Right cardiac atrium (tissue), 5 donors: ENCODE measurements at regions of chr13 and their contacts with region 1.

Region 1: GRCh38 chr13:32594157-32594738 is 8.0 kb downstream of the PDS5B start:
- DNase-seq: no peak
- ATAC-seq: no peak
- H3K4me3 ChIP-seq: no peak overlapping the region
- H3K27ac ChIP-seq: no peak overlapping the region
- H3K4me1 ChIP-seq: no peaks in the 10 kb centered on the region
- H3K27me3 ChIP-seq: no peaks in the 10 kb centered on the region

Region 2: GRCh38 chr13:32019612-32020233 is 574.5 kb before region 1 on chr13:
- intact Hi-C with region 1: no loop called
- DNase-seq: peak in 2 of 3 donors; percentile 27 to 42
- ATAC-seq: peak; percentile 61 to 71
- H3K4me3 ChIP-seq: no peak overlapping the region
- H3K27ac ChIP-seq: no peak overlapping the region
- H3K4me1 ChIP-seq: peaks cover 9% of the 10 kb centered on the region
- H3K27me3 ChIP-seq: no peaks in the 10 kb centered on the region

Region 3: GRCh38 chr13:32632343-32632909 is 38.2 kb after region 1 on chr13:
- intact Hi-C with region 1: loop called in 3 of 4 experiments (anchors 5 kb)
- DNase-seq: no peak
- ATAC-seq: no peak
- H3K4me3 ChIP-seq: no peak overlapping the region
- H3K27ac ChIP-seq: no peak overlapping the region
- H3K4me1 ChIP-seq: no peaks in the 10 kb centered on the region
- H3K27me3 ChIP-seq: no peaks in the 10 kb centered on the region

Region 4: DNA sequence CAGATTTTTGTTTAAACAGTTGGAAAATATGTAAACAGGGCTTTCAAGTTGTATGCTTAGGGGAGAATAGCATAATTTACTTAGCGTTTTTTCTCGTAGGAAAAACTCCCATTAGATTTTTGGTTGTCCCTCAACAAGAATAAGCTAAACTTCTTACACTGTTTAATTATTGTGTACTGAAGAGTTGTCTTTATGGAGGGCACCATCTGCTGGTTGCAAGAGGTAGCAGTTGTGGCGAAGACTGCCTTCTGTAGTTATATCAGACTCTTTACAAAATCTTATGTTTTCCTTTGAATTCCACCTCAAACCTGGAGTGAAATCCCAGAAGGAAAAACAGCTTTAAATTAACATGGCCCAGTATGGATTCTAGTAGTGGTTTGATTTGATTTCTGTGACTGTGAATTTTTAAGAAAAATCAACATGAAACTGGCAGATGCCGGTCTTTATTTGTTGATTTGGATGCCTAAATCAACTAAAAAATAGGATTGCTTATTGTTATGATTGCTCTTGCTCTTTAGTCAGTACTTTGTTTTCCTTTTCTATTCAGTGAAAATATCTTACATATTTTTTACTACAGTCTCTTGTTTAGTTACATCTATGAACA is 45.4 kb after region 1 on chr13:
- intact Hi-C with region 1: loop called in 3 of 4 experiments (anchors 5 kb)
- DNase-seq: peak; percentile 39 to 82 (median 55)
- ATAC-seq: peak; percentile 81 to 86
- H3K4me3 ChIP-seq: no peak overlapping the region
- H3K27ac ChIP-seq: no peak overlapping the region
- H3K4me1 ChIP-seq: no peaks in the 10 kb centered on the region
- H3K27me3 ChIP-seq: no peaks in the 10 kb centered on the region